PC-9 (cell line): ENCODE measurements at regions of chr2 and their contacts with region 1.

Region 1: DNA sequence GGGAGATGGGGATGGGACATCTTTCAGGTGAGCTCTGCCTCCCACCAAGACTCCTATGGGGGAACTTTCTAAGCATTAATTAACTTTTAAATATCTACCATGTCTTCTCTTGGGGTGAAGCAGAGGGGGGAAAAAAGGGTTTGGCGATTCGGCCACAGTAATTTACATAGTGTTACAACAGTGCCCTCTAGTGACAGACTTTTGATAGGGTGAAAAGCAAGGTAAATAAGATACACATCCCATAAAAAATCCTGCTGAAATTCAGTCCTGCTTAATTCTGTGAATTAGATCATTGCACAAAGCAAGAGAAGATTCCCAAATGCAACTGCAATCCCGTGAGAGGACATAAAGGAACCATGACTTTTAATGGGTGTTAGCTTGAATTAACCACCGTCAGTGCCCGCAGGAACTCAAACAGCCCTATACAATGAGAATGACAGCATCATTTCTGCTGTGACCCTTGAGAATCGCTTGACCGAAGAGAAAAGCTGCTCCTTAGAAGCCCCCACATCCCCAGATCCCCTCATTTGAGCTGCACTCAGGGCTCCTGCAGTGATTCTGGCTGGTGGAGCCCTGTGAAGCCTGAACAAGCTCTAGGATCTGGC is 32.8 kb downstream of the FAM124B start:
- DNase-seq: peak; percentile 40 to 50
- H3K4me3 ChIP-seq: no peak overlapping the region
- H3K27ac ChIP-seq: no peak overlapping the region
- H3K4me1 ChIP-seq: no peaks in the 10 kb centered on the region
- H3K27me3 ChIP-seq: no peaks in the 10 kb centered on the region
- CTCF ChIP-seq: peak; percentile 97

Region 2: GRCh38 chr2:224202281-224202865 is 166.8 kb before region 1 on chr2:
- CTCF ChIA-PET with region 1: no interaction called
- POLR2A ChIA-PET with region 1: no interaction called
- intact Hi-C with region 1: no loop called
- DNase-seq: no peak
- H3K4me3 ChIP-seq: no peak overlapping the region
- H3K27ac ChIP-seq: no peak overlapping the region
- H3K4me1 ChIP-seq: peaks cover 4% of the 10 kb centered on the region
- H3K27me3 ChIP-seq: no peaks in the 10 kb centered on the region
- CTCF ChIP-seq: no peak

Region 3: DNA sequence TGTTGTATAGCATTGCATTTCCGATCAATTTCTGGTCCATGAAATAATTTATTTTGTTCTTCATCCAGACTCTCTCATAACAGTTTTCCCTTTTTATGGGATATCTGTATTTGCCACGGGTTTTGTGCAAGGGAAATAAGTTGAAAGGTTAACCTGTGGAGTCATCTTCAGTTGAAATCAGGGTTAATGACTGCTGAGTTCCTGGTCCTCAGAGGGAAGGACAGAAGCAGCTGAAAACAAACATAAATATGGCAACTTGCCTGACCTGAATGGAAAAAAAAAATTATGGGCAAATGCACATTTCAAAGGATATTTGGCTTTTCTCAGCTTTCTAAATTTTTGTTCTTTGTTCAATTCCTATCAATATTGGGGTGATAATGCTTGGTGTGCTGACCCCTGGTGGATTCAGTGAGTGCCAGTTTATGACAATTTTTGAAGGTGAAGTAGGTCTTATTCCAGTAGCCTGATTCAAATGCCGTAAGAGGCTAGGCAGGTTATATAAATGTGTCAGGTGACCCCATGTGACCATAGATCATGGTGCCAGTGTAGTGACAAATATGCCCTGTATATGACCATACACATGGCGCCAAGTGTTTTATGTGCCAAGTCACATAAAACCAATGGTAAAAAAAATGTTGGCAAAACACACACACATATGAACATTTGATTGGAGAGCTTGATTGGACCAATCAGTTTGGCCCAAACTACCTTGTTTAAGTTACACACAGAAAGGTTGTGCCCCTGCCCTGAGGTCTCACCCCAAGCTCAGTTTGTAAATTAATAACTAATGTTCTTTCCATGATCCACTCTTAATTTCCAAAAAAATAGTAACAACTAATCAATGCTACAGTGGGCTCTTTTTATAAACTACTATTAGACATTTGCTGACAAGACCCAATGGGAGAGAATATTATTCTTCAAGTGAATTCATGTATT is 80.3 kb after region 1 on chr2:
- CTCF ChIA-PET with region 1: no interaction called
- POLR2A ChIA-PET with region 1: no interaction called
- intact Hi-C with region 1: loop called (anchors 1 kb)
- DNase-seq: peak; percentile 24 to 50
- H3K4me3 ChIP-seq: no peak overlapping the region
- H3K27ac ChIP-seq: no peak overlapping the region
- H3K4me1 ChIP-seq: 0 out of 2 replicates have a peak, but pooled peaks cover 3% of the 10 kb centered on the region
- H3K27me3 ChIP-seq: no peaks in the 10 kb centered on the region
- CTCF ChIP-seq: peak; percentile 85